Posterior cingulate gyrus (tissue), 11 donors: ENCODE measurements at regions of chr12 and their contacts with region 1.

Region 1: GRCh38 chr12:49866859-49867579 is 24.1 kb upstream of the BCDIN3D start:
- DNase-seq: peak; percentile 43 to 95 (median 79)

Region 2: DNA sequence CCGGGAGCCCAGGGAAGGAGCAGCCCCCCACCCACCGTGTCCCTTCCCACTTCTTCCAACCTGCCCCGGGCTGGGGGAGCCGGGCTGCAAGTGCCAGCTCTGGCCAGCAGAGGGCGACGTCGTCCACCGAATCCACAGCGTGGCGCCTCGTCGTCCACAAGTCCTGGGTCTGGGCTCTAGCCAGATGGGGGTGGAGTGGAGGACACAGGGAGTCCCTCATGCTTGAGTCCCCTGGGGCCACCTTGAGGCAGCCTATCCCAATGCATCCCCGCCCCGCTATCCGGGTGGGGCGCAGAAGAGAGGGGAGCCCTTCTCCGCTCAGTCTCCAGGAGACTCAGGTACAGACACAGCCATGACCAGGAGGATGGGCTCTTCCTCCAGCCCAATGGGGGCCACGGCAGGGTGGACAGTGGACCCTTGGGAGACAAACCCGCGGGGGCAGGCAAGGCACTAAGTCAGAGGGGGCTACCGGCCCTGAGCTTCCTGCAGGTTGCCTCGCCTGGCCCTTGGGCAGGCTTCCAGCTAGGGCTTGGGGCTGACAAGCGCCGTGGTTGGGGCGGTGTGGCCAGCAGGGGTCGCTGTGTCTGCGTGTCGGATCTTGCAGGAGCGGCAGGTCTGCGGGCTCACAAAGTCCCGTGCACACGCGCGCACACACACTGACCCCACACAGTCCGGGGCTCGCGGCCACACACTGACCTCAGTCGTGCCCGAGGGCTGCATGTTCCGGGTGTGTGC is 100.2 kb after region 1 on chr12:
- intact Hi-C with region 1: loop called (anchors 5 kb)
- DNase-seq: peak; percentile 84 to 99 (median 96)